ENCODE measurements at regions of chr17 and their contacts with region 1.

Region 1: DNA sequence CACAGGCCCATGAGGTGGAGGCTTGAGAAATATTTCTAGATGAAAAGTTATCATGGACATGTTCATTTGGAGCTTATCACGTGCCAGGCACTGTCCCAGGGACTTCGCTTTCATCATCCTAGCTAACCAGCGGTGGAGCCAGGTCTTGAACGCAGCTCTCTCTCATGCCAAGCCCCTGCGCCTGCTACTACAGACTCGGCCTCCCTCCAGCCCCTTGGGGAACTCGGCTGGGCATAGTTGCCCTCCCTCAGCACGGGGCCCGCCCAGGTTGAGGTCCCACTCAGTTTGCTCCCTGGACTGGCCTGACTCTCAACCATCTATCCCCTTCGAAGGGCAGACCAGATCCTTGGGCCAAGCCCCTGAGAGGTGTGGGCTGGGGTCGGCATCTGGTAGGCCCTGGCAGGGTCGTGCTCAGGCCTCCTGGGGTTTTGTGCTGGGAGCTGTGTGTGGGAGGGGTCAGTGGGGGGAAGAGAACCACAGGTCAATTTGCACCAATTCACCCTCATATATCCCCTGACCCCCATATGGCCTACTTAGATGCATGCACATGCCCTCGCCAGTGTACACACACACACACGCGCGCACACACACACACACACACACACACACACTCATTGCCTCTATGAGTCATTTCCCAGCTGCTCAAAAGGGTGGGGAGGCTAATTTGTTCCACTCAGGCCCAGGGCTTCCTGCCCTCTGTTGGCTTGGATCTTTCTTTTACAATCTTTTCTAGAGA is 12.1 kb upstream of the SCN4A start:
- DNase-seq: peak; percentile 67
- ATAC-seq: peak; percentile 83
- H3K4me3 Mint-ChIP-seq: no peak overlapping the region
- H3K27ac Mint-ChIP-seq: peak overlapping the region; percentile 72
- H3K4me1 Mint-ChIP-seq: peaks cover 15% of the 10 kb centered on the region
- H3K27me3 Mint-ChIP-seq: no peaks in the 10 kb centered on the region

Region 2: GRCh38 chr17:63911657-63912426 is 73.0 kb before region 1 on chr17:
- CTCF ChIA-PET with region 1: interaction called, 17 read pairs
- DNase-seq: peak; percentile 73
- ATAC-seq: peak; percentile 65
- H3K4me3 Mint-ChIP-seq: no peak overlapping the region
- H3K27ac Mint-ChIP-seq: no peak overlapping the region
- H3K4me1 Mint-ChIP-seq: no peaks in the 10 kb centered on the region
- H3K27me3 Mint-ChIP-seq: peaks cover 31% of the 10 kb centered on the region

Region 3: DNA sequence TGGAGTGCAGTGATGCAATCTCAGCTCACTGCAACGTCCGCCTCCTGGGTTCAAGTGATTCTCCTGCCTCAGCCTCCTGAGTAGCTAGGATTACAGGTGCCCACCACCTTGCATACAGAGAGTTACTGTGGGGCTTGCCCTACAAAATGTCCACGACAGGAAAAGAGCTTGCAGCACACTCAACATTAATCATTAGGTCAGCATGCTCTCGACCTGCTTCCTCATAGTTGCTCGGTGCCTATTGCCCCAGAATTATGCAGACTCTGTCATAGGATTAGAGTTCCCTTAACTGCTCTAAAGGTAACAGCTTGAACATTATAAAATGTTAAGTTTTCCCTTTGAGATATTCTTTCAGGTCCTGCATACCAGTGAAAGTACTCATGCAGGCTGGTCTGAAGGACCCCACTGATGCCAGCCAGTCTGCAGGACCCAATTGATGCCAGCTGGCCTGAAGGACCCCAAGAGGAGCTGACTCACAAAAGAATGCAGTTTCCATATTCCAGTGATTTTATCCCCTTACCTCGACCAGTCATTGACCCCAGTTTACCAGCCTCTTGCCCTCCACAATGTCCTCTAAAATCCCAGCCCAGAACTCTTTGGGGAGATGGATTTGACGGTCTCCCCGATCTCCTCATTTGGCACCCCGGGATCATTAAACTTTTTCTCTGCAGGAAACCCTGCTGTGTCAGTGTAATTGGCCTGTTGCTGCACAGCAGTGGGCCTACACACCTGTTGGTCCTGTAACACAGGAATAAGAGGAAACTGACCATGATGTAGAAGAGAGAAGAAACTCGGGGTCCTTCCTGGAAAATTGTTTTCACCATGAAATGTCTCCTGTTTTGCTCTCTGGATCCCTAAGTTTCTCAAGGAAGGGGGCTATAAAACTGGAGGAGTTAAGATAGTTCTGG is 24.9 kb after region 1 on chr17:
- CTCF ChIA-PET with region 1: no interaction called
- DNase-seq: no peak
- ATAC-seq: no peak
- H3K4me3 Mint-ChIP-seq: no peak overlapping the region
- H3K27ac Mint-ChIP-seq: peak overlapping the region; percentile 5
- H3K4me1 Mint-ChIP-seq: peaks cover 35% of the 10 kb centered on the region
- H3K27me3 Mint-ChIP-seq: no peaks in the 10 kb centered on the region

Measured in activated CD8-positive, alpha-beta memory T cell treated with anti-CD3 and anti-CD28 coated beads, Interleukin-2, amount 10 ng/mL, durations not matched to agents 7 days and 5 days (primary cell).